Psoas muscle (tissue), 8 donors: ENCODE measurements at regions of chr4 and their contacts with region 1.

Region 1: GRCh38 chr4:88623097-88623496 is 30.8 kb downstream of the HERC3 start:
- DNase-seq: no peak
- ATAC-seq: peak in 3 of 4 donors; percentile 59 to 84 (median 63)
- H3K4me3 ChIP-seq: no peak overlapping the region
- H3K27ac ChIP-seq: no peak overlapping the region
- H3K4me1 ChIP-seq: peaks cover 28% of the 10 kb centered on the region
- H3K27me3 ChIP-seq: no peaks in the 10 kb centered on the region
- CTCF ChIP-seq: no peak

Region 2: GRCh38 chr4:88585917-88586316 is 37.2 kb before region 1 on chr4:
- intact Hi-C with region 1: loop called in 1 of 2 experiments (anchors 5 kb)
- DNase-seq: no peak
- ATAC-seq: no peak
- H3K4me3 ChIP-seq: no peak overlapping the region
- H3K27ac ChIP-seq: no peak overlapping the region
- H3K4me1 ChIP-seq: peaks cover 15% of the 10 kb centered on the region
- H3K27me3 ChIP-seq: no peaks in the 10 kb centered on the region
- CTCF ChIP-seq: no peak

Region 3: DNA sequence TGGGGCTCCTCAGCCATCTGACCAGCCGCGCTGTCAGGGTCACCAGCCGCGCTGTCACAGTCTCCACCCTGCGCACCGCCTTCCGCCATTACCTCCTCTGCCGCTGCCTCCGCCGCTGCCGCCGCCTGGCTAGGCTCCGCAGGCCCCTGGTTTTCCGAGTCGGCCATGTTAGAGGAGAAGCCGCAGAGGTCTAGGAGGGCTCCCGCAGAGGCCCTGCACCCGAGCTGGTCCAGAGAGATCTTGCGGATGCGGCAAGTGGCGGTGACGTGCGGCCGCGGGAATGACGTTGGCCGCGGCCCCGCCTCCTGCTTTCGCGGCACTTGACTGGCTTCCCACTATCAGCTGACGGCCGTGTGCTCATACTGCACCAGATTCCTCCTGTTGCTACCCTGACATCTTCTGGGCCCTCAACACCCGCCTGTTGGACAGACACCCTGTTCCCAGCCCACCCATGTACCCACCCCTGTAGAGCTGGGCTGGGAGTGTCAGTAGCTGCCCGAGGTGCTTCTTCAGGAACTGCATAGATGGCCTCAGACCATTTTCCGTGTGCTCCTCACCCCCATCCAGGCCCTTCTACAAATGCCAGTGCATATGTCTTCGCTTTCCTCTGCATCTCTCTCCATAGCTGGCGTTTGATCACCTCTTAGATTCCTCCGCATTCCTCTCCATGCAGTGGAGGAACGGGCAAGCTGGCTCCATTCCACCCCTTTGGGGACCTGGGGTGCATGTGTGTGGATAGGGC is 74.7 kb after region 1 on chr4 and contains the start of gene NAP1L5:
- intact Hi-C with region 1: loop called in 1 of 2 experiments (anchors 2 kb)
- DNase-seq: peak; percentile 71 to 84
- ATAC-seq: peak; percentile 86 to 93 (median 88)
- H3K4me3 ChIP-seq: peak within 1 kb of the TSS; percentile 77
- H3K27ac ChIP-seq: peak within 1 kb of the TSS; percentile 72
- H3K4me1 ChIP-seq: no peaks in the 10 kb centered on the region
- H3K27me3 ChIP-seq: no peaks in the 10 kb centered on the region
- CTCF ChIP-seq: no peak
- total RNA-seq, gene NAP1L5: 2.8 to 4.0 (median 3.8) TPM